B cell (primary cell): ENCODE measurements at regions of chr20 and their contacts with region 1.

Region 1: GRCh38 chr20:33781133-33781532 is 30.0 kb upstream of the CHMP4B start:
- DNase-seq: no peak
- ATAC-seq: no peak
- H3K4me3 ChIP-seq: no peak overlapping the region
- H3K4me3 Mint-ChIP-seq: peak overlapping the region; percentile 42
- H3K27ac ChIP-seq: peak overlapping the region; percentile 95 to 97
- H3K27ac Mint-ChIP-seq: peak overlapping the region; percentile 93
- H3K4me1 ChIP-seq: peaks cover 75 to 93% of the 10 kb centered on the region in 2 donors
- H3K4me1 Mint-ChIP-seq: peaks cover 74% of the 10 kb centered on the region
- H3K27me3 ChIP-seq: no peaks in the 10 kb centered on the region
- H3K27me3 Mint-ChIP-seq: no peaks in the 10 kb centered on the region
- CTCF ChIP-seq: no peak

Region 2: DNA sequence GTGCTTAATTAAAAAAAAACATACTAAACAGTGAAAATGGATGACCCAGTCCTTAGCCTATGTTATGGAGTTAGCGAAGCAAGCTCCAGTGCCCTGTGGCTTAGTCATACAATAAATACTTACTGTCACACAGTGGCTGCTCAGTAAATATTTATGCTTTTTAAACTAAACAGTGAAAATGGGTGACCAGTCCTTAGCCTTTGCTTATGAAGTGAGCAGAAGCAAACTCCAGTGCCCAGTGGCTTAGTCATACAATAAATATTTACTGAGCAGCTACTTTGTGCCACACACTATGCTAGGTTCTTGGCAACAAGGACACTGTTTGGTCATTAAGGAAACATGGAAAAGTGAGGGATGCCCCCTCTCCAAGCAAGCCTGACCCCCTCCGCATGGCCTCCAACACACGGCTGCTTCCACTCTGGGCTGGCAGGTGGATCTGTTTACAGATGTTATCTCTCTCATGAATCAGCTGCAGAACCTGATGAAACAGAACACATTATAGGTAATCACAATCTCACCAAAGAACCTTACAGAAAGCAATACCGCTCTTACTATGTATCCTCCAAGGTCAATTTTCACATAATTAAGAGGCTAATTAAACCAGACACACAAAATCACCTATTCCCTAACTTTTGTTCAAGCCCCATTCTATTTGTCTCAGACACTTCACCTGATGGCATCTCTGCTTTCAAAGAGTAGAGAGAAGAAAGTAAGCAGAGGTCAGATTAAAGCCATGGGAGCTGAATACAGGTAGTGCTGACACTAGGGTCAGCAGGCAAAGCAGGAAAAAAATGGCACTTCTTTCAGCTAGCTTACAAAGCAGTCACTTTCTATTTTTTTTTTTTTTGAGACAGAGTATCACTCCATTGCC is 407.2 kb before region 1 on chr20:
- CTCF ChIA-PET with region 1: no interaction called
- POLR2A ChIA-PET with region 1: no interaction called
- intact Hi-C with region 1: no loop called
- DNase-seq: no peak
- ATAC-seq: no peak
- H3K4me3 ChIP-seq: no peak overlapping the region
- H3K4me3 Mint-ChIP-seq: no peak overlapping the region
- H3K27ac ChIP-seq: no peak overlapping the region
- H3K27ac Mint-ChIP-seq: no peak overlapping the region
- H3K4me1 ChIP-seq: peaks cover 4 to 10% of the 10 kb centered on the region in 2 donors
- H3K4me1 Mint-ChIP-seq: peaks cover 4% of the 10 kb centered on the region
- H3K27me3 ChIP-seq: no peaks in the 10 kb centered on the region
- H3K27me3 Mint-ChIP-seq: no peaks in the 10 kb centered on the region
- CTCF ChIP-seq: no peak

Region 3: GRCh38 chr20:33408716-33409654 is 372.1 kb before region 1 on chr20:
- CTCF ChIA-PET with region 1: no interaction called
- POLR2A ChIA-PET with region 1: no interaction called
- intact Hi-C with region 1: loop called (anchors 5 kb)
- DNase-seq: peak; percentile 83
- ATAC-seq: peak; percentile 90
- H3K4me3 ChIP-seq: peak overlapping the region in 3 of 5 experiments; percentile 25 to 35 (median 29)
- H3K4me3 Mint-ChIP-seq: peak overlapping the region; percentile 81
- H3K27ac ChIP-seq: peak overlapping the region; percentile 57 to 75
- H3K27ac Mint-ChIP-seq: peak overlapping the region; percentile 96
- H3K4me1 ChIP-seq: peaks cover 26 to 43% of the 10 kb centered on the region in 2 donors
- H3K4me1 Mint-ChIP-seq: peaks cover 46% of the 10 kb centered on the region
- H3K27me3 ChIP-seq: no peaks in the 10 kb centered on the region
- H3K27me3 Mint-ChIP-seq: no peaks in the 10 kb centered on the region
- CTCF ChIP-seq: no peak

Region 4: DNA sequence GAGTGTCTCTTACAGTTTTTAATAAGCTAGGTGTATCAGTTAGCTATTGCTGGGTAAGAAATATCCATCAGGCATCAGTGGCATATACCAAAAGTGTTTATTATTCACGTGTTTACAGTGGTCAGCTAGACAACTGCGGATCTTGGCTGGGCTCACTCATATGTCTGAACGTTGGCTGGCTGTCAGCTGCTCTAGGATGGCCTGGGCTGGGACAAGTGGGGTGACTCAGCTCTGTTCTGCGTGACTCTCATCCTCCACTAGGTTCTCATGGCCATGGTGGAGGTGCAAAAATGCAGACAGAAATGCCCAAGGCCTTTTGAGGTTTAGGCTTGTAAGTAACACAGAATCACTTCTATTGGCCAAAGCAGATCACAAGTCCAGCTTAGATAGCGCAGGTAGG is 27.4 kb before region 1 on chr20:
- CTCF ChIA-PET with region 1: no interaction called
- POLR2A ChIA-PET with region 1: interaction called, 4 read pairs
- intact Hi-C with region 1: loop called (anchors 2 kb)
- DNase-seq: no peak
- ATAC-seq: no peak
- H3K4me3 ChIP-seq: no peak overlapping the region
- H3K4me3 Mint-ChIP-seq: no peak overlapping the region
- H3K27ac ChIP-seq: no peak overlapping the region
- H3K27ac Mint-ChIP-seq: no peak overlapping the region
- H3K4me1 ChIP-seq: peaks cover 10 to 15% of the 10 kb centered on the region in 2 donors
- H3K4me1 Mint-ChIP-seq: peaks cover 16% of the 10 kb centered on the region
- H3K27me3 ChIP-seq: no peaks in the 10 kb centered on the region
- H3K27me3 Mint-ChIP-seq: no peaks in the 10 kb centered on the region
- CTCF ChIP-seq: no peak

Region 5: DNA sequence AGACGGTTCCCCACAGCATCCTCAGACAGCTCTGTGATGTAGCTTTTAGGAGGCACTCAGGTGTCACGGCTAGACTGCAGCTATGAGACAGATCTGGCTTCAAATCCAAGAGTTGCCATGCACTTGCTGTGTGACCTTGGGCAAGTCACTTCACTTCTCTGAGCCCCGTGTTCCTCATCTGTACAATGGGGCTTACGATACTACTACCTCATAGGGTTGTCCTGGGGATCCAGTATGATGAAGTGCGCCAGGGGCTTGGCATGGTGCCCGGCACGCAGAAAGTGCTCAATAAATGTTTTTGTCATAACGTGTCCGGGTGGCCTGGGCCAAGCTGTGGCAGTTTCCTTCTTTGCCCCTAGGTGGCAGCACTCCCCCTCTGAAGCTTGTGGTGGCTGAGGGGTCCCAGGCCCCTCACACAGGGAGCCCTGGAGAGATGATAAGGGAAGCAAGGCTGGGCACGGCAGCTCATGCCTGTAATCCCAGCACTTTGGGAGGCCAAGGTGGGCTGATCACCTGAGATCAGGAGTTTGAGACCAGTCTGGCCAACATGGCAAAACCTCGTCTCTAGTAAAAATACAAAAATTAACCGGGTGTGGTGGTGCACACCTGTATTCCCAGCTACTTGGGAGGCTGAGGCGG is 10.9 kb after region 1 on chr20:
- CTCF ChIA-PET with region 1: interaction called, 11 read pairs
- POLR2A ChIA-PET with region 1: interaction called, 8 read pairs
- intact Hi-C with region 1: loop called (anchors 2 kb)
- DNase-seq: peak; percentile 64
- ATAC-seq: peak; percentile 57
- H3K4me3 ChIP-seq: no peak overlapping the region
- H3K4me3 Mint-ChIP-seq: no peak overlapping the region
- H3K27ac ChIP-seq: no peak overlapping the region
- H3K27ac Mint-ChIP-seq: no peak overlapping the region
- H3K4me1 ChIP-seq: peaks cover 6 to 11% of the 10 kb centered on the region in 2 donors
- H3K4me1 Mint-ChIP-seq: peaks cover 18% of the 10 kb centered on the region
- H3K27me3 ChIP-seq: no peaks in the 10 kb centered on the region
- H3K27me3 Mint-ChIP-seq: no peaks in the 10 kb centered on the region
- CTCF ChIP-seq: peak; percentile 82

Region 6: GRCh38 chr20:33992923-33993575 is 211.9 kb after region 1 on chr20:
- CTCF ChIA-PET with region 1: no interaction called
- POLR2A ChIA-PET with region 1: interaction called, 8 read pairs
- intact Hi-C with region 1: loop called (anchors 1 kb)
- DNase-seq: peak; percentile 99
- ATAC-seq: peak; percentile 84
- H3K4me3 ChIP-seq: peak overlapping the region; percentile 94 to 99 (median 98)
- H3K4me3 Mint-ChIP-seq: peak overlapping the region; percentile 92
- H3K27ac ChIP-seq: peak overlapping the region; percentile 90 to 91
- H3K27ac Mint-ChIP-seq: peak overlapping the region; percentile 99
- H3K4me1 ChIP-seq: peaks cover 40 to 48% of the 10 kb centered on the region in 2 donors
- H3K4me1 Mint-ChIP-seq: peaks cover 59% of the 10 kb centered on the region
- H3K27me3 ChIP-seq: no peaks in the 10 kb centered on the region
- H3K27me3 Mint-ChIP-seq: no peaks in the 10 kb centered on the region
- CTCF ChIP-seq: no peak